Posterior vena cava (tissue), 2 donors: ENCODE measurements at regions of chr1 and their contacts with region 1.

Region 1: DNA sequence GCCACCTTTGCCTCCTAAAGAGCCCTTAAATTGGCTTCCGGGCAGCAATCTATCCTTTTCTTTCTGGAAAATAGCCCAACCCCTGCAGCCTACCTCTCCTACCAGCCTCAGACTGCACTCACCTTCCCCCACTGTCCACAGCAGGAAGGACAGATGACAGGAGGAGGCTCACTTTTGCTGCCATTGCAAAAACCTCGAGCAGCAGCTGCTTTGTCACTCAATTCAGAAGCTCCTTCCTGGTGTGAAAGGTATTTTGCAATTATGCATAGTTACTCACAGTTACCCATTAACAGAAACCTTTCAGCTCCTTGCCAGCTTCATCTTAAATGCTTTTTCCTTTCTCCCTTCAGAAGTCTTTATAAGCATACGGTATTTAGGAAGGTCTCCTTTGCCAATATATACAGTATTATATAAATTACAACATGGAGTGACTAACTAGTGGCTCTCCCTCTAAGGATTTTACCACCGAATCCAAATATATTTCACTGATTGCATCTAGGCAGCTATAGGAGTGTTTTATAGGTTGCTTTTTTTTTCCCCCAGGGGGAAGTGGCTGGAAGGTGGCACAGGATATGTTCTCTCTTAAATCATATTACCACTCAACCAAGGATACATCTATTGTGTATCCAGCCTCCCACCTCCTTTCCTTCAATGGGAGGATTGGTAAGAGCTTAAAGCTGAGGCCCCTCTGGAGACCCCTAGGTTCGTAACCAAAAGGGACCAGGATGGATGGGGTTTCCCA is 142.1 kb upstream of the IPO9 start:
- DNase-seq: peak; percentile 13

Region 2: GRCh38 chr1:201662646-201663045 is 24.2 kb before region 1 on chr1:
- intact Hi-C with region 1: loop called in 1 of 2 experiments (anchors 1 kb)
- DNase-seq: no peak

Region 3: DNA sequence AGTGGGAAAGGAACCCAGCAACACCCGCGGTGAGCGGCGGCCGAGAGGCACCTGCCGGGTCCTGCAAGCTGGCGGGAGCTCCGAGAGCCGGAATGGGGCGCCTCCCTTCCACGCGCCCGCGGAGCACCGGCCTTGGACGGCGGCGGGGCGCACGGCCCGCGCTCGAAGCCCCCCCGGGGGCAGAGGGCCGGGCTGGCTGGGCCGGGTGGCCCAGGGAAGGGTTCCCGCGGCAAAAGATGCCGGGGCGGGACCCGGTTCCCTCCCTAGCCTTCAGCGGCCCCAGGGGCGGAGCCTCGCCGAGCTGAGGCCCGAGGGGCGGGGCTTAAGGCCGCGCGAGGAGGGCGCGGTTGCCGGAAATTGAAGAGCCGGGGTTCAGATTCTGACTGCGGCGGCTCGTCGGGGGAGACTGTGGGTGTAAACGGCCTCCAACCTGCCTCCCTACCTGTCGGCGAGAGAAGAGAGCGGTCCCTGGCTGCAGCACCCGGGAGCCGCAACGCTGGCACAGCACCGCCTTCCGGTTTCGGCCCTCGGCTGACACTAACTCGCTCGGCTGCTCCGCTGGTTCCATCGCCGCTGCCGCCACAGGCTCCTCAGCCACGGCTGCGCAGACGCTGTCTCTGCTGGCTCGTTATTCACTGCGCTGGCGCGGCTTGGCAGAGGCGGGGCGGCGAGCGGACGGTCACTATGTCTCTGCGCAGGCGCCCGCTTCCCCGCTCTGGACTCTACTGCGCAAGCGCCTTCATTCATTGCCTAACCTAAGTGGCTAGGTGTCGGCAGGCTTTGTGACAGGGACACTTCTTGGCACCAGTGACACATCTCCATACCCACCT is 1201.9 kb after region 1 on chr1 and contains the start of gene RABIF:
- intact Hi-C with region 1: no loop called
- DNase-seq: peak; percentile 99
- total RNA-seq, gene RABIF: 7.9 to 8.9 TPM